HepG2 (cell line): ENCODE measurements at regions of chr6 and their contacts with region 1.

Region 1: GRCh38 chr6:151067684-151068596 is 171.8 kb upstream of the AKAP12 start:
- DNase-seq: peak; percentile 96
- ATAC-seq: peak; percentile 88
- H3K4me3 ChIP-seq: peak overlapping the region; percentile 2 to 45 (median 3); a peak in 3 of 6 replicates
- H3K27ac ChIP-seq: peak overlapping the region; percentile 83
- H3K4me1 ChIP-seq: peaks cover 58% of the 10 kb centered on the region
- H3K27me3 ChIP-seq: no peaks in the 10 kb centered on the region
- CTCF ChIP-seq: no peak
- EP300 ChIP-seq: peak; percentile 54 to 90; a peak in 2 of 4 replicates
- POLR2A ChIP-seq: 0 out of 4 replicates have a peak, but pooled peaks of 1 of the 2 experiments have one; percentile 19
- RAD21 ChIP-seq: no peak

Region 2: DNA sequence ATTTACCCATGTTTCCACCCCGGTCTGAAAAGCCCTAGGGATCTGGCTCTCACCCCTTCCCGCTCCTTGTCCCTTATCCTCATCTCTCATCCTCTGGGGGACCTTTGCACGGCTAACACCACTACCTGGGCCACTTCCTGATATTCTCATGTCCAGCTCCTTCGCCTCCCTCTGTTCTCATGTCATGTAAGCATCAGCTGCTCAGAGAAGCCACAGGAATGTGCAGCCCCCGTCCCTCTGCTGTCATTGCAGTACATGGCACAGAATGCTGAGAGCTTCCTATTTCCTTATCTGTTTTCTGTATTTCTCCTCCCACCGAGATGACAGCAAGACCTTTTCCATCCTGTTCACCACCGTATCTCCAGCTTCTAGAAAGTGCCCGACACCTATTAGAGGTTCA is 100.0 kb before region 1 on chr6:
- CTCF ChIA-PET with region 1: no interaction called
- POLR2A ChIA-PET with region 1: no interaction called
- in situ Hi-C with region 1: no loop called
- intact Hi-C with region 1: no loop called
- DNase-seq: no peak
- ATAC-seq: no peak; the same call in 2 of the 3 replicates
- H3K4me3 ChIP-seq: no peak overlapping the region
- H3K27ac ChIP-seq: no peak overlapping the region
- H3K4me1 ChIP-seq: no peaks in the 10 kb centered on the region
- H3K27me3 ChIP-seq: no peaks in the 10 kb centered on the region
- CTCF ChIP-seq: no peak
- EP300 ChIP-seq: no peak
- POLR2A ChIP-seq: no peak
- RAD21 ChIP-seq: no peak

Region 3: DNA sequence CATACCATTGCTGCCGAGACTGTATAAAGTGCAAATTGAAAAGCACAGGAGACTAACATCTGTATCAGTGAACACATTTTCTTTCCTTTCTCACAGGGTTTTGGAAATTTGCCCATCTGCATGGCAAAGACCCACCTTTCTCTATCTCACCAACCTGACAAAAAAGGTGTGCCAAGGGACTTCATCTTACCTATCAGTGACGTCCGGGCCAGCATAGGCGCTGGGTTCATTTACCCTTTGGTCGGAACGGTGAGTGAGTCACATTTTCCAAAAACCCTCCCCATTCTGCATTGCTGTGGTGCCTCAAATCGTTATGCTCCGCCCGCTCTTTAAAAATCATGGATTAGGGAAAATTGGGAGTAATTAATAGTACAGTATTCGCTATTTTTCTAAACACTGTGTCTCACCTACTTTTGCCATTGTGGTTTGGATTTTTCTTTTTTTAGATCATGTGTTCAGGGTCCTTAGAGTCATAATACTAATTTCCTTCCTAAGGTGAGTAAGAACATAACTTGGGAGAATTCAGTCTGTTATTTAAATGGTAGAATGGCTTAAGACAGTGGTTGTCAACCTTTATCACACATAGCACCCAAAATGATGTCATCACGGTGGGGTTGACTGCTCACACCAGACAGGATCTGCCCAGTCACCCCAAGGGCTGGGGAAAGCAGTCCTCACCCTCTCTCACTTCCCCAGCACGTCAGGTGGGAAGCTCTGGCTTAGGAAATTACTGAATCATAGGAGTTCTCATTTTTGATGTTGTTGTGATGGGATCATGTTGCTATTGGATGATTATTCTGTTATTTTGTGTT is 30.9 kb before region 1 on chr6:
- CTCF ChIA-PET with region 1: no interaction called
- POLR2A ChIA-PET with region 1: interaction called, 15 read pairs
- in situ Hi-C with region 1: no loop called
- intact Hi-C with region 1: loop called (anchors 2 kb)
- DNase-seq: no peak
- ATAC-seq: no peak
- H3K4me3 ChIP-seq: no peak overlapping the region
- H3K27ac ChIP-seq: peak overlapping the region; percentile 96
- H3K4me1 ChIP-seq: peaks cover 69% of the 10 kb centered on the region
- H3K27me3 ChIP-seq: no peaks in the 10 kb centered on the region
- CTCF ChIP-seq: no peak
- EP300 ChIP-seq: no peak
- POLR2A ChIP-seq: no peak
- RAD21 ChIP-seq: no peak

Region 4: DNA sequence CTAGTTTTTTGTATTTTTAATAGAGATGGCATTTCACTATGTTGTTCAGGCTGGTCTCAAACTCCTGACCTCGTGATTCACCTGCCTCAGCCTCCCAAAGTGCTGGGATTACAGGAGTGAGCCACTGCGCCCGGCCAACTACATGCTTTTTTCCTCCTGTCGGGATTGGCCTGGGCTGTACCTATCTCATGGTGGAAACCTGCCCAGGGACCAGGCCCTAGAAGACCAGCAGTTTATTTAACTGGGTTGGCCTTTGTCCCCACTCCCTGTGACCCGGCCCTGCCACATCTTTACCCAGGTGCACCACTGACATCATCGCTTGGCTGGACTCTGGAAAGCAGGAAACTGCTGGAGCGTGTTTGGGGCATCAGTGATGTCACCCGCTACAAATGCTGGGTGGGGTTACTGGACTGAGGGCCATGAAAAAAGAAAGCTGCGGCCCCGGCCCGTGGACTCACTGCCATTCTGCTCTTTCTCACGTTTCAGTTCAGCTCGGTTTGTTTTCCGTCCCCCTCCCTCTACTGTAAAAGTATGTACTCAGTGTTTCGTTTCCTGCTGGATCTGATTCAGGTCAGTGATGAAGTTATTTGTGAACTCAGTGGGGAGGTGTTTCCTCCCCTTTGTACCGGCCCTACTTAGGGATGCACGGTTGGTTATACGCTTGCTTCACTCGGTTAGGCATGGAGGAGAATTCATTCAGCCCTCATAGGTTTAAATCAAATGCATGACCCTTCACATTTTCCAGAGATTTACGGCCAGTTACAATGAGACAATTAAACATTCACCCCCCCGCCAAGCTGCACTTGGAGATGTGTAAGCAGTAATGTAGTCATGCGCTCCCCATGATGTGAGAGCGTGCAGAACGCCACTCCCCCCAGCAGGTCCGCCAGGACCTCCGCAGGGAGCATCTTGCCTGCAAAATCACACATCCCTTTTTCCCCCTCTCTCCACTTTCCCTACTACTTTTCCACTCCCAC is 23.2 kb before region 1 on chr6:
- CTCF ChIA-PET with region 1: no interaction called
- POLR2A ChIA-PET with region 1: interaction called, 15 read pairs
- in situ Hi-C with region 1: no loop called
- intact Hi-C with region 1: no loop called
- DNase-seq: peak; percentile 93
- ATAC-seq: peak; percentile 73
- H3K4me3 ChIP-seq: peak overlapping the region in 1 of 3 experiments; percentile 9; a peak in 1 of 6 replicates
- H3K27ac ChIP-seq: peak overlapping the region; percentile 73
- H3K4me1 ChIP-seq: peaks cover 61% of the 10 kb centered on the region
- H3K27me3 ChIP-seq: no peaks in the 10 kb centered on the region
- CTCF ChIP-seq: no peak
- EP300 ChIP-seq: peak in 1 of 2 experiments; percentile 44; a peak in 1 of 4 replicates
- POLR2A ChIP-seq: no peak
- RAD21 ChIP-seq: 0 out of 2 replicates have a peak, but pooled peaks have one; percentile 7

Region 5: DNA sequence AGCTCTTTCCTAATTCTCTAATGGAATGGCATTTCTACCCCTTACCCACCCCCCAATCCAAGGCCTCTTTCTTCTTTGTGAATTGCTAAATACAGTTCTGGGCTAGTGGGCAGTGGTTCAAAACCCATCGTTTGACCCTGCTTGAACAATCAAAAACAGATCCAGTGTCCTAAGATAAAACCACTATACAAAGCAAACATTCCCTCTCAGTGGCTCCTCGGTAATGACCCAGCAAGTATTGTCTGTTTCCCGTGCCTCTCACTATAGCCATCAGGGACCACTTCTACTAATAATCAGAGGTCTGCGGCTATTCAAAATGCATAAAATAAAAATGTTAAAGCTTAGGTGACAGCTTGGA is 28.3 kb after region 1 on chr6:
- CTCF ChIA-PET with region 1: no interaction called
- POLR2A ChIA-PET with region 1: interaction called, 17 read pairs
- in situ Hi-C with region 1: no loop called
- intact Hi-C with region 1: loop called (anchors 1 kb)
- DNase-seq: peak; percentile 97
- ATAC-seq: peak; percentile 96
- H3K4me3 ChIP-seq: peak overlapping the region in 1 of 3 experiments; percentile 28; a peak in 1 of 6 replicates
- H3K27ac ChIP-seq: peak overlapping the region; percentile 66
- H3K4me1 ChIP-seq: peaks cover 30% of the 10 kb centered on the region
- H3K27me3 ChIP-seq: no peaks in the 10 kb centered on the region
- CTCF ChIP-seq: no peak
- EP300 ChIP-seq: peak; percentile 76 to 91
- POLR2A ChIP-seq: no peak
- RAD21 ChIP-seq: no peak; the same call in 1 of the 2 replicates

Region 6: GRCh38 chr6:151121900-151122299 is 54.0 kb after region 1 on chr6:
- CTCF ChIA-PET with region 1: interaction called, 3 read pairs
- POLR2A ChIA-PET with region 1: interaction called, 6 read pairs
- in situ Hi-C with region 1: no loop called
- intact Hi-C with region 1: loop called (anchors 10 kb)
- DNase-seq: no peak
- ATAC-seq: no peak
- H3K4me3 ChIP-seq: no peak overlapping the region
- H3K27ac ChIP-seq: no peak overlapping the region
- H3K4me1 ChIP-seq: peaks cover 63% of the 10 kb centered on the region
- H3K27me3 ChIP-seq: no peaks in the 10 kb centered on the region
- CTCF ChIP-seq: no peak
- EP300 ChIP-seq: no peak
- POLR2A ChIP-seq: no peak
- RAD21 ChIP-seq: no peak